ENCODE measurements at regions of chr20 and their contacts with region 1.

Region 1: DNA sequence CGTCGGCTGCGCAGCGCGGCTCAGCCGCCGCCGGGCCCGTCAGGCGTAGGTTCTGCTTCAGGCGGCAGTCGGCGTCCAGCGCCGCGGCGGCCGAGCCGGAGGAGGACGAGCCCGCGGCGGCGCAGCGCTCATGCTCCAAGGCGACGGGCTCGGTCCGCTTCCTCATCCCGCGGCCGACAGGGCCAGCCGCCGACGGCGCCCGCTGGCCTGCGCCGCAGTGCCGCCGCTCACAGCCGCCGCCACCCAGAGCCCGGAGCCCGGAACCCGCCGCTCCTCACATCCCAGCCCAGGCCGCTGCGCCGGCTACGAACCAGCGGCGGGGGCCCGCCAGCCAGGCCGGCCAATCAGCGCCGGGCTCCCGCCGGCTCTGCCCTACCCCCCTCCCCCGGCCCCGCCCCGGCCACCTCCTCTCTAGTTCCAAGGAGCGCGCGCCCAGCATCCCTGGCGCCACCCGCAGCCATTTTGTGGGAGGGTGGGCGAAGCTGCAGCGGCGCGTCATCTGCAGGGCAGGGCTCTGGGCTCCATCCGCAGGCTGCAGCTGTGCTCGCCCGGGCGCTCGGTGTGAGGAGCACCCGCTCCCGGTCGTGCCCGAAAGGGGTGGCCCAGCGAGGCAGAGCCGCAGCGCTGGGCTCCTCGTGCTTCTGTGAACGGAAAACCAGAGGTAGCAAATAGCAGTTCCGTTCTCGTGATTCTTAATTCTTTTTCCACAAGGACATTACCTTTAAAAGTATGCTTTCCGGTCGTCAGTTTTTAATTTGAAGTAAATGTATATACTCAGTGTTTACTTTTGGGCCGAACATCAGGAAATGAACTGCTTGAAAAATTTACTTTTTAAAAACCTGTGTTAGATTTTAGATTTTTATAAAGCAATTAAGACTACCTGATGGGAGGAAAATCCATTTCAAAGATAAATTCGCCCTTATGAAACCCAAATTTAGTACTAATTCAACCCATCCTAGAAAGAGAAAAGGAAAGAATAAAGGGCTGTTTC is at the start of gene ABHD12:
- DNase-seq: peak; percentile 96
- H3K4me3 ChIP-seq: peak within 1 kb of the TSS; percentile 83 to 89
- H3K27ac ChIP-seq: peak within 1 kb of the TSS; percentile 86 to 94
- H3K4me1 ChIP-seq: no peaks in the 10 kb centered on the region
- H3K27me3 ChIP-seq: no peaks in the 10 kb centered on the region
- CTCF ChIP-seq: peak in 2 of 4 experiments; percentile 19 to 22
- POLR2A ChIP-seq: peak; percentile 68
- total RNA-seq, gene ABHD12: 70.1 to 84.7 TPM

Region 2: GRCh38 chr20:25195014-25195961 is 195.5 kb before region 1 on chr20 and contains the start of gene ENTPD6:
- intact Hi-C with region 1: loop called (anchors 10 kb)
- DNase-seq: peak; percentile 92
- H3K4me3 ChIP-seq: peak within 1 kb of the TSS; percentile 78 to 94
- H3K27ac ChIP-seq: peak within 1 kb of the TSS; percentile 93 to 95
- H3K4me1 ChIP-seq: peaks cover 4% of the 10 kb centered on the region
- H3K27me3 ChIP-seq: no peaks in the 10 kb centered on the region
- CTCF ChIP-seq: peak in 3 of 4 experiments; percentile 20 to 45 (median 31)
- POLR2A ChIP-seq: peak; percentile 92
- total RNA-seq, gene ENTPD6: 105 to 194 TPM

Region 3: DNA sequence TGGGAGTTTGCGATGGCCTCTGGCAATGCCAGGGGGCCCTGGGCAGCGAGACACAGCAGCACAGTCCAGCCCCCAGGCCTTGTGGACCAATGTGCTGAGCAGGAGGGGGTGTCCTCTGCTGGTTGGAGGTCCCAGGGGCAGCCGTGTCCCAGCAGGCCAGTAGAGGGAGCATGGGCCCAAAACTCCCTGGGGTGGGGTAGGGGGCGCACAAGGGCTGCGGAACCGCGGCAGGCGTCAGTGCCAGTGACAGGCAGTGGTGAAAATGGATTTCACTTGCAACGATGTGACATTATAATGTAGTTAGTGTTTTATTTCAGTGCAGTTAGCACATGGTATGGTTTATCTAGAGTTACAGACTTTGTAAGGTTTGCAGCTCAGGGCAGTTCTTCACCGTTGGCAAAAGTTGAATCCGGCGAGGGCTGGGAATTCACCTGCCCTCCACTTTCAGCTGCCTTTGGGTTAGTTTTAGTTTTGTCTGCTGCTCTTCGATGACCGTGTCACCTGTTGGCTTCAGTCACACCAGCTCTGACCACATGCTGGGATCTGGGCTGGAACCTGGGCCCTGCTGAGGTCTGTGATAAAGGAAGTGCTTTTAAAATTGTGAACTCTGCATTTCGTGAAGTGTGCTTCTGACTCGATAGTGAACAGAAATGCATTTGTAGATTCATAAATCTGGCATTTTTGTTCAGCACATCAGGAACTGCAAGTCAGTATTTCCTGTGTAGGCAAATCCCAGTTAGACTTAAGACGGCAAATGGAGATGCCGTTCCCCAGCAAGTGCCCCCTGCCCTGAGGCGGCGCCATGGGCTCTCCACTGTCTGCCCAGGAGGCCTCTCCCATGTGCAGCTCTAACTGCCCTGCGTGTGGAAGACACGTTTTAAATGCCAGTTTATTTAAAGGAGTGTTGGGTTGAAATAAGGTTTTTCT is 96.1 kb before region 1 on chr20:
- intact Hi-C with region 1: loop called (anchors 5 kb)
- DNase-seq: no peak
- H3K4me3 ChIP-seq: no peak overlapping the region
- H3K27ac ChIP-seq: peak overlapping the region; percentile 47 to 49
- H3K4me1 ChIP-seq: peaks cover 8% of the 10 kb centered on the region
- H3K27me3 ChIP-seq: no peaks in the 10 kb centered on the region
- CTCF ChIP-seq: peak in 3 of 4 experiments; percentile 45 to 69 (median 68)
- POLR2A ChIP-seq: no peak